A673 (cell line): ENCODE measurements at regions of chr15 and their contacts with region 1.

Region 1: DNA sequence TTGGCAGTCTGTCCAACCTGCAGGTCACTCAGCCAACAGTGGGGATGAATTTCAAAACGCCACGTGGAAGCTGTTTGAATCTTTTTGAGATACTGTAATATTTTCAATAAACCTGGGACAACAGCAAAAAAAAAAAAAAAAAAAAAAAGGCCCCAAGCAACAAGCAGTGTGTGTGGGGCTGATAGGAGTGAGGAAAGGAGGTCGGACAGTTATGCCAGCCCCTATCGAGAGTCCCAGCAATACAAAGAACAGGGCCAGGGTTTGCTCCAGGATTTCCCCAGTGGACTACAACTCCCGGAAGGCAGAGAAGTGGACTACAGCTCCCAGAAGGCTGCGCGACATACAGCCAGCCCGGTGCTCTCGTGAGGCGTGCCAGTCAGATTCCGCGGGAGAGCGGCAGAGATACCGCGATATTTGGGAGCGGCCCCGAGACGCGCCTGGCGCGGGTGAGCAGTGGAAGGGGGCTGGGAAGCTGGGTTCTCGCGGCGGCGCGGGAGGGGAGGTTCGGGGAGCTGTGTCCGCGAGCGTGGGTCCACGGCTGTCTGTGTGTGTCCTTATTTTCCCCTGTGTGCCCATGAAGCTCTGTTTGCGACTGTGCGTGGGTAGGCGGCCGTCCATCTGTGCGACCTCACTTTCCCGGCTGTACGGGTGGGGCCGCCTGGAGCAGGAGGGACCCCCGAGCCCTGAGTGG is at the start of gene PPCDC:
- DNase-seq: peak; percentile 98
- H3K4me3 ChIP-seq: peak within 1 kb of the TSS; percentile 79
- H3K27ac ChIP-seq: peak within 1 kb of the TSS; percentile 95
- H3K4me1 ChIP-seq: peaks cover 15% of the 10 kb centered on the region
- H3K27me3 ChIP-seq: no peaks in the 10 kb centered on the region
- CTCF ChIP-seq: no peak
- total RNA-seq, gene PPCDC: 13.3 and 18.9 TPM in 2 replicates

Region 2: DNA sequence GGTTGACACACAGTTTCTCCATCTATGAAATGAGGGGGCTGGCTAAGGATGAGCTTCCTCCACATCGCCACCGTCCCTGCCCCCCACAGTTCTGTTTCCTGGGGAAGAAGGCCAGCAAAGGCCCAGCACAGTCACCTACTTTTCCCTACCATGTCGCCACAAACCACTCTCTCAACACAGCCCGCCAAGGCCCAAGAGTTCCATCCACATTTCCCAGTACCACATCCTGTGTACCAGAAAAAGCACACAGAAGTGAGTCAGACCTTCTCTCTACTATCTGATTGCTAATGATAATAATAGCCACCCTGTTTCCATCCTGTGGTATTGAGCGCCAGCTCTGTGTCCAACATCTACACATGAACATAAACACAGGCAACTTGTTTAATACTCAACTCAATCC is 148.1 kb after region 1 on chr15:
- CTCF ChIA-PET with region 1: no interaction called
- POLR2A ChIA-PET with region 1: no interaction called
- intact Hi-C with region 1: no loop called
- DNase-seq: no peak
- H3K4me3 ChIP-seq: no peak overlapping the region
- H3K27ac ChIP-seq: no peak overlapping the region
- H3K4me1 ChIP-seq: no peaks in the 10 kb centered on the region
- H3K27me3 ChIP-seq: no peaks in the 10 kb centered on the region
- CTCF ChIP-seq: no peak

Region 3: DNA sequence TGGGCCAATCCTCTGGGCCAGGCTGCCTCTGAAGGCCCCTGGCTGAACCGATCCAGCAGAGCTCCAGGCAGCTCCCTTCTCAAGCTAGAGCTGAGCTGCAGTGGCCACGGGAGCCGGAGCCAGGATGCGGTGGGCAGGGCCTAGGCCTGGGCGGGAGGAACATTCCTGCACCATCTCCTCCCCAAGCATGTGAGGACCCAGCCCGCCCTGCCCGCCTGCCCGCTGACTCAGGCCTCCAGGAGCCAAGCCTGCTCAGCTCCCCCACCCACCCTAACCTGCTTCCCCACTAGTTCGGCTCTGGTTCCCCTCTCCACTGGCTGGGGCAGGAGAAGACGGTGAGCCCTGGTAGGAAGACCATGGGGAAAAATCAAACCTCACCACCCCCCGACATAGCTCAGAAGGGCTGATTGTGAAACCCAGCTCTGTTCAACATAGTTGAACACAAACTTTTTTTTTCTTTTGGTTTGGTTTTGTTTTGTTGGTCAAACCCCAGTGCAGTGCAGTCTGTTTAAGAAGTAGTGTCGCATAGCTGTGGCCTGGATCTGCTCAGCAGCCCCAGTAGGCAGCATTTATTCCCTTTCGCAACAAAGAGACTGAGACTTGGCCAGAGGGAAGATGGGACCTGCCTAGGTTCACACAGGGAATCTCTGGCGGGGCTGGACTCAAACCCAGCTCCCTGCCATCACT is 637.9 kb after region 1 on chr15:
- CTCF ChIA-PET with region 1: no interaction called
- POLR2A ChIA-PET with region 1: no interaction called
- intact Hi-C with region 1: loop called (anchors 10 kb)
- DNase-seq: no peak
- H3K4me3 ChIP-seq: no peak overlapping the region
- H3K27ac ChIP-seq: no peak overlapping the region
- H3K4me1 ChIP-seq: peaks cover under 1% of the 10 kb centered on the region
- H3K27me3 ChIP-seq: no peaks in the 10 kb centered on the region
- CTCF ChIP-seq: no peak